GM12878 (cell line): ENCODE measurements at regions of chr15 and their contacts with region 1.

Region 1: GRCh38 chr15:78195735-78196201 is 38.6 kb downstream of the ACSBG1 start:
- DNase-seq: no peak
- ATAC-seq: peak; percentile 99
- H3K4me3 ChIP-seq: no peak overlapping the region
- H3K27ac ChIP-seq: no peak overlapping the region
- H3K4me1 ChIP-seq: no peaks in the 10 kb centered on the region
- H3K27me3 ChIP-seq: peaks cover 0 to 2% of the 10 kb centered on the region in 2 experiments; a peak in 2 of 4 replicates
- CTCF ChIP-seq: peak; percentile 89 to 98 (median 93); a peak in 5 of 6 replicates
- EP300 ChIP-seq: no peak
- POLR2A ChIP-seq: no peak
- RAD21 ChIP-seq: peak; percentile 85

Region 2: DNA sequence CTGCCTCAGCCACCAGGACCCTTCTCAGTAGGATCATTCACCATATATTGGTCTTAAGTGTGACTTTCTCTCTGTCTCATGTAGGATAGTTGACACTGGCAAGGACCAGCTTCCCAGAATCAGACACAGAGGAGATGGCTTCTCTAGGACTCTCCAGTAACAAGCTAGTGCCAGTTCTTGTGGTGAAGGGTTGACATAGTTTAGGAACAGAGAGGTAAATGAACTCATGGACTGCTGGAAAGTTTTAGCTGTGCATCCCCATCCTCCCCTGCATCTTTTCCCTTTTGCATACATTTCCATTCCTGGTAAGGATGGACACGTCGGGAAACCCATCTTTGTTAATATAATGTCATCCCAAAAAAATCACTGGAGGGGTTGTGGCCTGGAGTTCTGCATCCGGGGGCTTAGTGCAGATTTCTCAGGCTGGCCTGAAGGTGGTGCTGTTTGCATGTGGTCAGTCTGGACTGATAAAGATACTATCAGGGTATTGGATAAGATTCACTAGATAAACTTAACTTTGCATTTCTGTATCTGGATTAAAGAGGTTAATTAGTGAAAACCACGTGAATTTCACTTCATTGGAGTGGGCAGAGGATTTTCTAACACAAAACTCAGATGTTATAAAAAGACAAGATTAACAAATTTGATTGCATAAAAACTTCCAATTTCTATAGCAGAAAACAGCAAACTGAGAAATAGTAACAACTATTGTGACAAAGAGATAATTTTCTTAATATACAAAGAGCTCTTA is 229.1 kb before region 1 on chr15:
- CTCF ChIA-PET with region 1: interaction called, 11 read pairs
- POLR2A ChIA-PET with region 1: no interaction called
- RAD21 ChIA-PET with region 1: interaction called, 11 read pairs
- SMC1A ChIA-PET with region 1: interaction called, 6 read pairs
- in situ Hi-C with region 1: loop called (anchors 5 kb)
- intact Hi-C with region 1: no loop called
- DNase-seq: no peak
- ATAC-seq: peak; percentile 96
- H3K4me3 ChIP-seq: no peak overlapping the region
- H3K27ac ChIP-seq: no peak overlapping the region
- H3K4me1 ChIP-seq: peaks cover 6% of the 10 kb centered on the region; the same call in 1 of the 2 replicates
- H3K27me3 ChIP-seq: no peaks in the 10 kb centered on the region
- CTCF ChIP-seq: peak; percentile 83 to 85 (median 84)
- EP300 ChIP-seq: no peak
- POLR2A ChIP-seq: no peak
- RAD21 ChIP-seq: peak; percentile 86

Region 3: GRCh38 chr15:78131295-78132061 is 64.3 kb before region 1 on chr15 and contains the start of gene CIB2:
- CTCF ChIA-PET with region 1: interaction called, 200 read pairs
- POLR2A ChIA-PET with region 1: interaction called, 9 read pairs
- RAD21 ChIA-PET with region 1: interaction called, 147 read pairs
- SMC1A ChIA-PET with region 1: interaction called, 57 read pairs
- in situ Hi-C with region 1: no loop called
- intact Hi-C with region 1: loop called (anchors 1 kb)
- DNase-seq: no peak
- ATAC-seq: peak; percentile 93
- H3K4me3 ChIP-seq: peak within 1 kb of the TSS; percentile 88
- H3K27ac ChIP-seq: peak within 1 kb of the TSS; percentile 72
- H3K4me1 ChIP-seq: peaks cover 5% of the 10 kb centered on the region
- H3K27me3 ChIP-seq: no peaks in the 10 kb centered on the region
- CTCF ChIP-seq: peak; percentile 65 to 92 (median 73); a peak in 5 of 6 replicates
- EP300 ChIP-seq: no peak
- POLR2A ChIP-seq: peak; percentile 80
- RAD21 ChIP-seq: peak; percentile 73
- polyA plus RNA-seq, gene CIB2: 0.56 to 1.6 TPM

Region 4: DNA sequence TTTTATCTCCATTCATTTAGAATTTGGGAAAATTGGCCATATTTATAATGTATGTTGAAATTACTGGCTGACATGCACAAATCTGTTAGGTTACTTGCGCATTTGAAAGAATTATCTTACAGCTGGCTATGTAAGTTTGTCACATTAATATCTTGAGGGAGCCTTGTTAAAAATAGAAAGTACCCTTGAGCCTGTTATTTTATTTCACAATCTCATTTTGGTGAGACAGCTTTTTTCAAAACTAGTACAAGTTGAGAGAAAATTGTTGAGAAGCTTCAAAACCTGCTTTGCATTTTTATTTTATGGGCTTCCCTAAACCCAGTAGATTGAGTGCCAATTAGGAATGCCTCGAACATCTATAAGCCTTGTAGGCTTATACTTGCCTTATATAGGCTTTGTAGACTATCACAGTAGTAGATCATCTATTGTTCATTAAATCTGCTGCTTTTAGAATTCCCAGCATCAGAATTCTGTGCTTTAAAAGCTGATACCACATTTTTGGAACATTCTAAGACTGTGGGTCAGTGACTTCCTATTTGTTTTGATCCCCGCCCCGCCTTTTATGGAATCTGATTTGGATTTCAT is 40.3 kb before region 1 on chr15:
- CTCF ChIA-PET with region 1: interaction called, 6 read pairs
- POLR2A ChIA-PET with region 1: no interaction called
- RAD21 ChIA-PET with region 1: interaction called, 14 read pairs
- SMC1A ChIA-PET with region 1: interaction called, 8 read pairs
- in situ Hi-C with region 1: no loop called
- intact Hi-C with region 1: no loop called
- DNase-seq: no peak
- ATAC-seq: no peak
- H3K4me3 ChIP-seq: no peak overlapping the region
- H3K27ac ChIP-seq: no peak overlapping the region
- H3K4me1 ChIP-seq: peaks cover 6% of the 10 kb centered on the region
- H3K27me3 ChIP-seq: no peaks in the 10 kb centered on the region
- CTCF ChIP-seq: no peak
- EP300 ChIP-seq: no peak
- POLR2A ChIP-seq: no peak
- RAD21 ChIP-seq: no peak

Region 5: GRCh38 chr15:78182821-78183220 is 12.9 kb before region 1 on chr15:
- CTCF ChIA-PET with region 1: interaction called, 108 read pairs
- POLR2A ChIA-PET with region 1: no interaction called
- RAD21 ChIA-PET with region 1: interaction called, 31 read pairs
- SMC1A ChIA-PET with region 1: interaction called, 38 read pairs
- in situ Hi-C with region 1: no loop called
- intact Hi-C with region 1: no loop called
- DNase-seq: no peak
- ATAC-seq: no peak
- H3K4me3 ChIP-seq: no peak overlapping the region
- H3K27ac ChIP-seq: no peak overlapping the region
- H3K4me1 ChIP-seq: no peaks in the 10 kb centered on the region
- H3K27me3 ChIP-seq: no peaks in the 10 kb centered on the region
- CTCF ChIP-seq: no peak
- EP300 ChIP-seq: no peak
- POLR2A ChIP-seq: no peak
- RAD21 ChIP-seq: no peak

Region 6: GRCh38 chr15:78251136-78251535 is 55.4 kb after region 1 on chr15:
- CTCF ChIA-PET with region 1: no interaction called
- POLR2A ChIA-PET with region 1: no interaction called
- RAD21 ChIA-PET with region 1: no interaction called
- SMC1A ChIA-PET with region 1: no interaction called
- in situ Hi-C with region 1: no loop called
- intact Hi-C with region 1: no loop called
- DNase-seq: no peak
- ATAC-seq: no peak
- H3K4me3 ChIP-seq: no peak overlapping the region
- H3K27ac ChIP-seq: no peak overlapping the region
- H3K4me1 ChIP-seq: no peaks in the 10 kb centered on the region
- H3K27me3 ChIP-seq: 0 out of 4 replicates have a peak, but pooled peaks cover 0 to 1% of the 10 kb centered on the region in 2 experiments
- CTCF ChIP-seq: no peak
- EP300 ChIP-seq: no peak
- POLR2A ChIP-seq: no peak
- RAD21 ChIP-seq: no peak

Region 7: GRCh38 chr15:78276064-78276943 is 80.5 kb after region 1 on chr15:
- CTCF ChIA-PET with region 1: no interaction called
- POLR2A ChIA-PET with region 1: no interaction called
- RAD21 ChIA-PET with region 1: no interaction called
- SMC1A ChIA-PET with region 1: no interaction called
- in situ Hi-C with region 1: no loop called
- intact Hi-C with region 1: no loop called
- DNase-seq: no peak
- ATAC-seq: no peak
- H3K4me3 ChIP-seq: no peak overlapping the region
- H3K27ac ChIP-seq: no peak overlapping the region
- H3K4me1 ChIP-seq: no peaks in the 10 kb centered on the region
- H3K27me3 ChIP-seq: no peaks in the 10 kb centered on the region
- CTCF ChIP-seq: no peak
- EP300 ChIP-seq: no peak
- POLR2A ChIP-seq: no peak
- RAD21 ChIP-seq: no peak